SK-N-SH (cell line): ENCODE measurements at regions of chr3 and their contacts with region 1.

Region 1: DNA sequence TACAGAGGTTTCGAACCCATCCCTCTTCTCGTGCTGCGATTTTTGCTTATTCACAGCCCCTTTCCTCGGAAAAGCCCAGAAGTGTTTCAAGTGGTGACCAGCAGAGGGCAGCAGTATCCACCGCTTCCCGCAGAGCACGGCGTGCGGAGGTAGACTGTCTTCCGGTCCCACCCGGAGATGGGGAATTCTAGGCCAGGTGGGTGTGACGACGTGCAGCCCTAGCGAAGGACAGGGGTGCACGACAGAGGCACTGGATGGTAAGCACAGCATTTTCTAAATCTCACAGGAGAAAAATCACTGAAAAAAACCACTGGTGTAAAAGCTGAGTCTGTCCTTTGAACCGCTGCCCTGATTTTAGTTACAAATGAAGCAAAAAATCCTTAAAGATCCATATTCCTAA is 7.4 kb upstream of the PSMD6 start:
- DNase-seq: peak; percentile 69
- H3K4me3 ChIP-seq: peak overlapping the region; percentile 22 to 49; a peak in 3 of 4 replicates
- H3K27ac ChIP-seq: no peak overlapping the region
- H3K4me1 ChIP-seq: peaks cover 0 to 20% of the 10 kb centered on the region in 2 experiments; a peak in 2 of 4 replicates
- H3K27me3 ChIP-seq: no peaks in the 10 kb centered on the region
- CTCF ChIP-seq: peak; percentile 88
- EP300 ChIP-seq: no peak
- RAD21 ChIP-seq: peak; percentile 98

Region 2: GRCh38 chr3:63960048-63960711 is 70.6 kb before region 1 on chr3:
- CTCF ChIA-PET with region 1: no interaction called
- POLR2A ChIA-PET with region 1: no interaction called
- DNase-seq: no peak
- H3K4me3 ChIP-seq: peak overlapping the region in 1 of 2 experiments; percentile 20; a peak in 1 of 4 replicates
- H3K27ac ChIP-seq: peak overlapping the region; percentile 8 to 64; a peak in 2 of 4 replicates
- H3K4me1 ChIP-seq: peaks cover 17 to 21% of the 10 kb centered on the region in 2 experiments; a peak in 3 of 4 replicates
- H3K27me3 ChIP-seq: no peaks in the 10 kb centered on the region
- CTCF ChIP-seq: 0 out of 2 replicates have a peak, but pooled peaks have one; percentile 12
- EP300 ChIP-seq: no peak
- RAD21 ChIP-seq: no peak

Region 3: GRCh38 chr3:63970631-63971475 is 59.9 kb before region 1 on chr3:
- CTCF ChIA-PET with region 1: no interaction called
- POLR2A ChIA-PET with region 1: no interaction called
- DNase-seq: no peak
- H3K4me3 ChIP-seq: no peak overlapping the region
- H3K27ac ChIP-seq: no peak overlapping the region
- H3K4me1 ChIP-seq: peaks cover 14 to 15% of the 10 kb centered on the region in 2 experiments; a peak in 3 of 4 replicates
- H3K27me3 ChIP-seq: no peaks in the 10 kb centered on the region
- CTCF ChIP-seq: no peak
- EP300 ChIP-seq: no peak
- RAD21 ChIP-seq: no peak

Region 4: DNA sequence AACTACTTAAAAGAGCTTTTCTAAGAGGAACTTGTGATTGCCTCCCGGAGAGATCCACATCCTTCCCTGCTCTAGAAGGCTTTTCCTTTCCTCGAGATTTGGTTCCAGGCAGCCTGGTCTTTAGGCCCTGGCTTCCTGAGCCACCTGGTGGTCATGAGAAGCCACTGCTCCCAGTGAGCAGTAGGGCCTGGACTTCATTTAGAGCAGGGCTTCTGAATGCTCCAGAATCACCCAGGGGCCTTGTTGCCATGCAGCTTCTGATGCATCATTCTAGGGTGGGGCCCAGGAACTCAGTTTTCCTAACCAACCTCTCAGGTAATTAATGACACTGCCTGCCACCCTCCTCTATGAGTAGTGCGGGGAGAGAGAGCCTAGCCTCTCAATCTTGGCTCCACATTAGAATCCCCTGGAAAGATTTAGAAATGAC is 37.1 kb before region 1 on chr3:
- CTCF ChIA-PET with region 1: no interaction called
- POLR2A ChIA-PET with region 1: no interaction called
- DNase-seq: peak; percentile 82
- H3K4me3 ChIP-seq: no peak overlapping the region; a peak in 1 of 4 replicates
- H3K27ac ChIP-seq: no peak overlapping the region
- H3K4me1 ChIP-seq: no peaks in the 10 kb centered on the region
- H3K27me3 ChIP-seq: no peaks in the 10 kb centered on the region
- CTCF ChIP-seq: peak; percentile 90
- EP300 ChIP-seq: no peak
- RAD21 ChIP-seq: peak; percentile 90

Region 5: DNA sequence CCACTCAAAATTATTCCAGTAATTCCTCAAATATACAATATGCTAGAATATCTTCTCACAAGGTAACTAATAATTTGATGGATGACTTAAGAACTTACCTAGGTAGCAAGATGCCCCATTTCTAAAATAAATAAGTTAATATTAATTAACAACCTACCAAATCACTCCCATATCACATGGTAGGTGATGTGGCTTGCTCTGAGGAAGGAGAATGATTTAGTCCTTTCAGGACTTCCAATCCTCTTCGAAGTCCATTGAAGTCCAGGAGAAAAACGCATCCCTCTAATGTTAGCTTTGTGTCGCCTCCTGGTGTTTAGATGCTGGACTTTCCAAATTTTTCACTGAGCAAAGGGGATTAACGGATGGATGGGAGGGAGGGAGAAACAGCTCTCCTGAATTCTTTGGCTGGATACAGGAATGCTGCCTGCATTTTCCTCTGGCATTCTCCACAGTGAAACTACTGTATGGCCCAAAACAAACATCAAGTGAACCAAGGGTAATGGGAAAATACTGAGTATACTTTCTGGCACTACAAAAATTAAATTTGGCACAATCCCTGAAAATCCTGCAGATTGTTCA is 135.9 kb after region 1 on chr3:
- CTCF ChIA-PET with region 1: interaction called, 27 read pairs
- POLR2A ChIA-PET with region 1: no interaction called
- DNase-seq: peak; percentile 54
- H3K4me3 ChIP-seq: no peak overlapping the region
- H3K27ac ChIP-seq: no peak overlapping the region
- H3K4me1 ChIP-seq: peaks cover 0 to 10% of the 10 kb centered on the region in 2 experiments; a peak in 2 of 4 replicates
- H3K27me3 ChIP-seq: no peaks in the 10 kb centered on the region
- CTCF ChIP-seq: peak; percentile 42
- EP300 ChIP-seq: no peak
- RAD21 ChIP-seq: peak; percentile 74

Region 6: GRCh38 chr3:64267721-64268604 is 237.2 kb after region 1 on chr3:
- CTCF ChIA-PET with region 1: no interaction called
- POLR2A ChIA-PET with region 1: no interaction called
- DNase-seq: no peak
- H3K4me3 ChIP-seq: no peak overlapping the region
- H3K27ac ChIP-seq: peak overlapping the region in 1 of 2 experiments; percentile 84; a peak in 2 of 4 replicates
- H3K4me1 ChIP-seq: peaks cover 19 to 29% of the 10 kb centered on the region in 2 experiments
- H3K27me3 ChIP-seq: no peaks in the 10 kb centered on the region
- CTCF ChIP-seq: no peak
- EP300 ChIP-seq: no peak
- RAD21 ChIP-seq: no peak

Region 7: GRCh38 chr3:64399205-64399800 is 368.6 kb after region 1 on chr3:
- CTCF ChIA-PET with region 1: interaction called, 54 read pairs
- POLR2A ChIA-PET with region 1: no interaction called
- DNase-seq: peak; percentile 58
- H3K4me3 ChIP-seq: peak overlapping the region in 1 of 2 experiments; percentile 27; a peak in 1 of 4 replicates
- H3K27ac ChIP-seq: no peak overlapping the region
- H3K4me1 ChIP-seq: peaks cover 0 to 8% of the 10 kb centered on the region in 2 experiments; a peak in 3 of 4 replicates
- H3K27me3 ChIP-seq: no peaks in the 10 kb centered on the region
- CTCF ChIP-seq: peak; percentile 85
- EP300 ChIP-seq: no peak
- RAD21 ChIP-seq: peak; percentile 90

Region 8: GRCh38 chr3:64475037-64475436 is 444.3 kb after region 1 on chr3:
- CTCF ChIA-PET with region 1: interaction called, 10 read pairs
- POLR2A ChIA-PET with region 1: no interaction called
- DNase-seq: no peak
- H3K4me3 ChIP-seq: no peak overlapping the region
- H3K27ac ChIP-seq: no peak overlapping the region
- H3K4me1 ChIP-seq: no peaks in the 10 kb centered on the region
- H3K27me3 ChIP-seq: no peaks in the 10 kb centered on the region
- CTCF ChIP-seq: no peak
- EP300 ChIP-seq: no peak
- RAD21 ChIP-seq: no peak